ENCODE measurements at regions of chr4 and their contacts with region 1.

Region 1: GRCh38 chr4:36285784-36286480 is 4.5 kb downstream of the DTHD1 start:
- DNase-seq: peak; percentile 79
- H3K4me3 Mint-ChIP-seq: peak overlapping the region; percentile 49
- H3K27ac Mint-ChIP-seq: peak overlapping the region; percentile 95
- H3K4me1 Mint-ChIP-seq: peaks cover 78% of the 10 kb centered on the region
- H3K27me3 Mint-ChIP-seq: peaks cover 2% of the 10 kb centered on the region

Region 2: DNA sequence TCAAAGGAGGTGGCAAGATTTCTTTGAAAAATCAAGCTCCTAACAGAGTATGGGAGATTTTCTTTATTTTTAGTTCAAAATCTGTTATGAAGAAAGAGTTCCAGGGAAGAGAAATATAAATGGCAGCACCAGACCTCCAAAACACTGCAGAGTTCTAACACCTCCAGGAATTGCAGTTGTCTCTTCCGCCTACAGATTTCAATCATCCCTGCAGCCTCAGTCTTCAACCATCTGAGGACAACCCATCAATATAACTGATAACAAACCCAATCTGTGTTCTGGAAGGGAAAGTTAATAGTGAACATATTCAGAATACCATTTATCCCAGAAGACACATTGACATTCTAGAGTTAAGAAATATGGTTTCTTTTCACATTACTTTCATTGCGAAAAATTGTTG is 337.8 kb before region 1 on chr4:
- intact Hi-C with region 1: no loop called
- DNase-seq: no peak
- H3K4me3 Mint-ChIP-seq: no peak overlapping the region
- H3K27ac Mint-ChIP-seq: no peak overlapping the region
- H3K4me1 Mint-ChIP-seq: no peaks in the 10 kb centered on the region
- H3K27me3 Mint-ChIP-seq: peaks cover 6% of the 10 kb centered on the region

Region 3: DNA sequence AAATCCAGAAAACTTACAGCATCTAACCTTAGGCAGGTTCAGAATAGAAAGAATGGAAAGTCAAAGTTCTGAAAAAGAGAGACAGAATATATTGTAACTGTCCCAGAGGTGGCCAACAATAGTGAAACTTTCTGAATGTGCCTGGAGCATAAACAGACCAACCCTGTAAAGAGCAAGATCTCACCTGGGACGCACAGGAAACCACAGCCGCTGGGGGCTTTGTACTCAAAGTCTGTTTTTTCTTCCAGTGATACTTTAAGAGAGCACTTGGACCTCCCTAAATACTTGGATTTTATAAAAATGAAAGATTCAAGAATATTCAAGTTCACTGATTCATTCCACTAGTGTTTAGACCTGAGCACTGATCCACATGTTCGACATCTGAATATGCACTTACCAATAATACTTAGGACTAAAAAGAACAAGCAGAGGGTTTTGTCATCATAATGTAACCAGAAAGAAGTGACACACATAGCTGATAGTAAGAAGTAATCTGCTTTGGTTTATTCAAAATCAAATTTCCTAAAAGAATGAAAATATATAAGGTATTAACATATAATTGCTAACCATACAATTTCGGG is 76.9 kb before region 1 on chr4:
- intact Hi-C with region 1: loop called (anchors 1 kb)
- DNase-seq: peak; percentile 10
- H3K4me3 Mint-ChIP-seq: peak overlapping the region; percentile 56
- H3K27ac Mint-ChIP-seq: peak overlapping the region; percentile 70
- H3K4me1 Mint-ChIP-seq: peaks cover 64% of the 10 kb centered on the region
- H3K27me3 Mint-ChIP-seq: no peaks in the 10 kb centered on the region

Region 4: GRCh38 chr4:36269101-36269500 is 16.8 kb before region 1 on chr4:
- intact Hi-C with region 1: loop called (anchors 1 kb)
- DNase-seq: peak; percentile 59
- H3K4me3 Mint-ChIP-seq: no peak overlapping the region
- H3K27ac Mint-ChIP-seq: peak overlapping the region; percentile 75
- H3K4me1 Mint-ChIP-seq: peaks cover 56% of the 10 kb centered on the region
- H3K27me3 Mint-ChIP-seq: no peaks in the 10 kb centered on the region

Region 5: GRCh38 chr4:36325499-36325898 is 39.6 kb after region 1 on chr4:
- intact Hi-C with region 1: loop called (anchors 1 kb)
- DNase-seq: no peak
- H3K4me3 Mint-ChIP-seq: peak overlapping the region; percentile 23
- H3K27ac Mint-ChIP-seq: peak overlapping the region; percentile 73
- H3K4me1 Mint-ChIP-seq: peaks cover 71% of the 10 kb centered on the region
- H3K27me3 Mint-ChIP-seq: no peaks in the 10 kb centered on the region

Region 6: DNA sequence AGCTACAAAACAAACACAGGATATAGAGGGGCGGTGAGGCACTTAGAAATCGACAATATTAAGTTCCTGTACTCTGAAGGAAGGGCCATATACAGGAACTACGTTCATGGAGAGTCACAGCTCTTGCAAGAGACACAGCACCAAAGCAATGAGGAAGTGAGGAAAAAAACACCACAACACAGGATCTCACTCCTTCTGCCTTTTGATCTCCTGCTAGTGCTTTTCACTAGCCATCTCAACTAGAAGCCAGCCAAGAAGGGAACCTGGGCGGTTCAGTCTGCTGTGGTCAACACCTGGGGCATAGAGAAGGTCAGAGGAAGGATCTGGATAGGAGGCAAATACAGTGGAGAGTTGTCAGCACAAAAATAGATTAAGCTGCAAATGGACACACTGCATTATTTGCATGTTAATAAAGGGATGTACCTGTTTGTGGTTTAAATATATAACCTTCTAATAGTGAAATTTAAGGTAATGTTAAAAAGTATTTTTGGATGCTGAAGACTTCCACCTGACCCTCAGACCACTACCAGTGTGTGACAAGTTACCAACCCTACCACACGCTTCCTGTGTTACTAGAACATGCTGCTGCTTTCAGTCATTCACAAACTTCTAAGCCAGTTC is 100.1 kb after region 1 on chr4:
- intact Hi-C with region 1: loop called (anchors 1 kb)
- DNase-seq: peak; percentile 40
- H3K4me3 Mint-ChIP-seq: peak overlapping the region; percentile 52
- H3K27ac Mint-ChIP-seq: peak overlapping the region; percentile 86
- H3K4me1 Mint-ChIP-seq: peaks cover 40% of the 10 kb centered on the region
- H3K27me3 Mint-ChIP-seq: peaks cover 12% of the 10 kb centered on the region

Region 7: DNA sequence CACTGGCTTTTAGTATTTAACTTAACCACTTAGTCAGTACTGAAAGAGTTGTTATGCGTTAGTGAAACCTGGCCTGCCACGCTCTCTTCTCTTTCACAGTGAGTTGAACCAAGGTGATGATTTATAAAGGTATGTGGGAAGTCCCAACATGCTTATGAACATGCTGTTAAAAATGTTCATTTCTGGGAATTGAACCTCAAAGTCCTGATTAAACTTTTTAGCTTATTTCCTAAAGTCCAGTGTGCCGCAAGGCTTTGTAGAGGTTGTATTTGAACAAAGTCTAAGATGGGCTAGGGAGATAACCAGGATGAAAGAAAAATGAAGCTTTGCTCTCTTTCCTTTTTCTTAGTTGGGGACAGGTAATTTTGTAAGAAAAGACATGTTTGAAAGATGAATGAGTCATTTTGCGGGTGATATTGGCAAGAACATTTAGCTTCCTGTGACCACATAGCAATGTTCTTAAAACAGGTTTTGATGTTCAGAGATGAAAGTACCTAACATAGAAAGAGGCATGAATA is 265.8 kb after region 1 on chr4:
- intact Hi-C with region 1: loop called (anchors 10 kb)
- DNase-seq: no peak
- H3K4me3 Mint-ChIP-seq: no peak overlapping the region
- H3K27ac Mint-ChIP-seq: peak overlapping the region; percentile 28
- H3K4me1 Mint-ChIP-seq: peaks cover 7% of the 10 kb centered on the region
- H3K27me3 Mint-ChIP-seq: no peaks in the 10 kb centered on the region

Measured in activated T-helper 1 cell treated with anti-CD3 and anti-CD28 coated beads, Interleukin-12 subunit alpha, Interleukin-12 subunit beta, Interleukin-2, Interleukin-4 antibody, amounts not matched to agents 30 ng/mL and 10 ng/mL and 1 ng/mL, durations not matched to agents 14 hours and 24 hours and 36 hours (primary cell).